CD4-positive, alpha-beta T cell (primary cell): ENCODE measurements at regions of chr1 and their contacts with region 1.

Region 1: DNA sequence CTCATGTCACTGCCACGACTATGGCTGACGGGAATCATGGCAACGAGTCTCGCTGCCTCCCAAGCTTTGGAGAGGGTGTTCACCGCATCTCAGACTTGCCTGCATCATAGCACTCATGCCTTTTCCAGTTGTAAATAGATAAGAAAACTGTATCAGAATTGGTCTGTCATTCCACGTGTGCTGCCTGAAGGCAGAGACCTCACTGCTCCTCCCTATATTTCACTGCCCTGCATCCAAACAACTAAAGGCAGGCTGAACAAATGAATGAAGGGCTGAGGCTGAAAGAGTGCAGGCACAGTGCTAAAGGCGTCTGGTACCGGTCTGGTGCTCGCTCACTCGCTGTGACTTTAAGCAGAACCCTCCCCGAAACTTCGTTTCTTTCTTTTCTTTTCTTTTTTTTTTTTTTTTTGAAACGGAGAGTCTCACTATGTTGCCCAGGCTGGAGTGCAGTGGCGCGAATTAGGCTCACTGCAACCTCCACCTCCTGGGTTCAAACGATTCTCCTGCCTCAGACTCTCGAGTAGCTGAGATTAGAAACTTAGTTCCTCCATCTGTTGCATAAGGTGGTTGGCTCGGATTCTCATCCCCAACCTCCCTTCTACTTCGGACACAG is 542 bp downstream of the EIF2B3 start:
- DNase-seq: no peak
- ATAC-seq: no peak
- H3K4me3 ChIP-seq: peak overlapping the region; percentile 73
- H3K4me3 Mint-ChIP-seq: peak overlapping the region; percentile 99
- H3K27ac ChIP-seq: no peak overlapping the region
- H3K27ac Mint-ChIP-seq: peak overlapping the region; percentile 74
- H3K4me1 ChIP-seq: peaks cover 20% of the 10 kb centered on the region
- H3K4me1 Mint-ChIP-seq: peaks cover 32% of the 10 kb centered on the region
- H3K27me3 ChIP-seq: no peaks in the 10 kb centered on the region
- H3K27me3 Mint-ChIP-seq: no peaks in the 10 kb centered on the region
- CTCF ChIP-seq: no peak

Region 2: DNA sequence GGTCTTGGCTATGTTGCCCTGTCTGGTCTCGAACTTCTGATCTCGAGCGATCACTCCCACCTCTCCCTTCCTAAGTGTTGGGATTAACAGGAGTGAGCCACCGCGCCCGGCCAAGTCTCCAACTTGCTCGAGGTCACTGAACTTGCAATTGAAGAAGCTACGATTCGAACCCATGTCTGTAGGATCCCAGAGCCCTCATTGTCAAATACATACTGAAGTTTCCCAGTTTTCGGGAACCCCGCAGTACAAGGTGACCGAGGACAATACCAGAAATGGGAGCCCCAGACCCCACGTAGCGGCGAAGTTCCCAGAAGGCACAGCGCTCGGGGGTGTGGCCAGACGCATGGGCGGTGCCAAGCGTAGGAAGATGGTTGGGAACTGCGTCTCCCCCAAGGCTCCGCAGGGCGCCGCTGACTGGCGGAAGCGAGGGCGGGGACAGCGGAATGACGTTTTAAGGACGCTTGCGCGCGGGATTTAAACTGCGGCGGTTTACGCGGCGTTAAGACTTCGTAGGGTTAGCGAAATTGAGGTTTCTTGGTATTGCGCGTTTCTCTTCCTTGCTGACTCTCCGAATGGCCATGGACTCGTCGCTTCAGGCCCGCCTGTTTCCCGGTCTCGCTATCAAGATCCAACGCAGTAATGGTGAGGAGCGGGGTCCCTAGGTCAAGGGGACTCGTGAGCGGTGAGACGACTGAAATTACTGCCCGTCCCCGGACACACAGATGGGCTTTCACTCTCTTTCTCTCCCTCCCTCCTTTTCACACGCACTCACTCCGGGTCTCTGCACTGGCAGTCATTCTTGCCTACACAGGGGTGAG is 246.3 kb before region 1 on chr1 and contains the start of gene KIF2C:
- CTCF ChIA-PET with region 1: no interaction called
- POLR2A ChIA-PET with region 1: no interaction called
- intact Hi-C with region 1: loop called in 1 of 2 experiments (anchors 5 kb)
- DNase-seq: peak; percentile 94 to 98 (median 96)
- ATAC-seq: peak; percentile 100
- H3K4me3 ChIP-seq: peak within 1 kb of the TSS; percentile 66
- H3K4me3 Mint-ChIP-seq: peak within 1 kb of the TSS; percentile 98
- H3K27ac ChIP-seq: peak within 1 kb of the TSS; percentile 63 to 85
- H3K27ac Mint-ChIP-seq: peak within 1 kb of the TSS; percentile 97
- H3K4me1 ChIP-seq: peaks cover 8% of the 10 kb centered on the region
- H3K4me1 Mint-ChIP-seq: peaks cover 18% of the 10 kb centered on the region
- H3K27me3 ChIP-seq: no peaks in the 10 kb centered on the region
- H3K27me3 Mint-ChIP-seq: no peaks in the 10 kb centered on the region
- CTCF ChIP-seq: no peak
- total RNA-seq, gene KIF2C: 0.64 to 0.82 TPM

Region 3: DNA sequence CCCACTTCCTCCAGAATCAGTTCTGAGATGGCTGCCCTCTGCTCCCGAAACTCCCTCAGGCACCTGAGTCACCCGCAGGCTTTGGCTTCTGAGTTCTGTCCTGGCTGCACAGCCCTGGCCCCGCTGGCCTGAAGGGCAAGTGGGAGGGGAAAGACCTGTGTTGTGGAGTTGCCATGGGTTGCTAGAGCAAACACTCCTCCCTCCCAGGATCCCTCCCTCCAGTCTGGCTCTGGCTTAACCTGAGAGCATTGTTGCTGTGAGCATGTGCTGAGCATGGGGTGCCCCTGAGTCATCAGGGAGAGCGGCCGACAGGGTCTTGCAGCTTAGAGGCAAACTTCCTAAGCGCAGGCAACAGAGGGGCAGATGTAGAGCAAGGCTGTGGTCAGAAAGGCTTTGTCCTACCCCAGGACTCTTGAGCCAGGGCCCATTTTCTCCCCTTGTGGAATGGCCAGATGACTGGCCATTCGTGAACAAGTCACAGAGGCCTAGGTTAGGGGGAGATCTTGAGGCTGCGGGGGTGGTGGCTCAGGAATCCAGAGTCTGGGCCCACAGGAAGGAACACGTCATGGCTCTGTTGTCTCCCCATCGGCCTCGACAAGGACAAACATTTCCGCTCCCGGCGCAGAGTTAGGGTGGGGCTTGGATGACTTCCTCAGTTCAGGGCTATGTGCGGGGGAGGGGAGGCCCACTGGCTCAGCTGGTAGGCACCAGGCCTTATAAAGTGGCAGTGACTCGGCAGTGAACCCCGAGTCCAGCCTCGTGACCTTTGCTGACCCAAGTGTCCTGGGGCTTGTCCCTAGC is 178.4 kb before region 1 on chr1 and contains the start of gene DYNLT4:
- CTCF ChIA-PET with region 1: interaction called, 3 read pairs
- POLR2A ChIA-PET with region 1: interaction called, 11 read pairs
- intact Hi-C with region 1: loop called in 1 of 2 experiments (anchors 10 kb)
- DNase-seq: peak; percentile 82 to 98 (median 94)
- ATAC-seq: peak; percentile 56
- H3K4me3 ChIP-seq: peak within 1 kb of the TSS; percentile 12
- H3K4me3 Mint-ChIP-seq: peak within 1 kb of the TSS; percentile 83
- H3K27ac ChIP-seq: peak within 1 kb of the TSS; percentile 99 to 100
- H3K27ac Mint-ChIP-seq: peak within 1 kb of the TSS; percentile 99
- H3K4me1 ChIP-seq: peaks cover 100% of the 10 kb centered on the region
- H3K4me1 Mint-ChIP-seq: peaks cover 79% of the 10 kb centered on the region
- H3K27me3 ChIP-seq: no peaks in the 10 kb centered on the region
- H3K27me3 Mint-ChIP-seq: peaks cover 4% of the 10 kb centered on the region
- CTCF ChIP-seq: no peak
- total RNA-seq, gene DYNLT4: 1.8 to 2.1 TPM

Region 4: DNA sequence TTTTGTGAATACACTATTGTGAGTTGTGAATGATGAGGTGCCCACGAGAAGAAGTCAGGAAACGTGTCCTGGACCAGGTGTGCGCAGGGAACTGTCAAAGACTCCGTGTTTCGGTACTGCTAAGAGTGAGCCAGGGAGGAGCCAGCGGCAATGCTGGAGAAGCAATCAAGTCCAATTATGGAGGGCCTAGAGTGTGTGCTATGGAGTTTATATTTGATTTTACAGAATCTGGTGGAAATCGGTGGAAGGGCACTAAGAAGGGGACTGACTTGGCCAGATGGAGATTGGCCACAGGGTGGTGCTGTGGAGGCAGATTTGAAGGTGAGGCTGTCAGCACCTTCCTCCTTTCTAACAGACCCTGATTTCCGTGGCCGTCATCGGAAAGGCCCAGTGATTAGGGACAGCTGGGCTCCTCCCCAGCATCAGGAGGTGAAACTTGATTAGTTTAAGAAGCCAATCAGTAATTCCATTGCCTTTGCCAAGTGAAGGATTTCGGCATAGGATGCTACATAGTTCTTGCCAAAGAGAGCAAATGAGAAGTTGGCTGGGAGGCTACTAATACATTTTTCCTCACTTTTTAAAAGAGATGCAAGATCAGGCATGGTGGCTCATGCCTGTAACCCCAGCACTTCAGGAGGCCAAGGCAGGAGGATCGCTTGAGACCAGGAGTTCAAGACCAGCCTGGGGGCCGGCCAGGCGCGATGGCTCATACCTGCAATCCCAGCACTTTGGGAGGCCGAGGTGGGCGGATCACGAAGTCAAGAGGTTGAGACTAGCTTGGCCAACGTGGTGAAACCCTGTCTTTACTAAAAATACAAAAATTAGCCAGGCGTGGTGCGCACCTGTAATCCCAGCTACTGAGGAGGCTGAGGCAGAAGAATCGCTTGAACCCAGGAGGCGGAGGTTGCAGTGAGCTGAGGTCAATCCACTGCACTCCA is 149.8 kb before region 1 on chr1:
- CTCF ChIA-PET with region 1: no interaction called
- POLR2A ChIA-PET with region 1: no interaction called
- intact Hi-C with region 1: loop called in 1 of 2 experiments (anchors 5 kb)
- DNase-seq: peak; percentile 77 to 93 (median 84)
- ATAC-seq: peak; percentile 98
- H3K4me3 ChIP-seq: no peak overlapping the region
- H3K4me3 Mint-ChIP-seq: no peak overlapping the region
- H3K27ac ChIP-seq: no peak overlapping the region
- H3K27ac Mint-ChIP-seq: no peak overlapping the region
- H3K4me1 ChIP-seq: peaks cover 9% of the 10 kb centered on the region
- H3K4me1 Mint-ChIP-seq: peaks cover 8% of the 10 kb centered on the region
- H3K27me3 ChIP-seq: no peaks in the 10 kb centered on the region
- H3K27me3 Mint-ChIP-seq: peaks cover 11% of the 10 kb centered on the region
- CTCF ChIP-seq: peak; percentile 91

Region 5: GRCh38 chr1:45508295-45509151 is 522.7 kb after region 1 on chr1:
- CTCF ChIA-PET with region 1: no interaction called
- POLR2A ChIA-PET with region 1: no interaction called
- intact Hi-C with region 1: no loop called
- DNase-seq: no peak
- ATAC-seq: no peak
- H3K4me3 ChIP-seq: no peak overlapping the region
- H3K4me3 Mint-ChIP-seq: no peak overlapping the region
- H3K27ac ChIP-seq: no peak overlapping the region
- H3K27ac Mint-ChIP-seq: peak overlapping the region; percentile 37
- H3K4me1 ChIP-seq: no peaks in the 10 kb centered on the region
- H3K4me1 Mint-ChIP-seq: no peaks in the 10 kb centered on the region
- H3K27me3 ChIP-seq: no peaks in the 10 kb centered on the region
- H3K27me3 Mint-ChIP-seq: no peaks in the 10 kb centered on the region
- CTCF ChIP-seq: no peak

Region 6: GRCh38 chr1:45804669-45804969 is 818.8 kb after region 1 on chr1:
- CTCF ChIA-PET with region 1: no interaction called
- POLR2A ChIA-PET with region 1: no interaction called
- intact Hi-C with region 1: no loop called
- DNase-seq: no peak
- ATAC-seq: no peak
- H3K4me3 ChIP-seq: no peak overlapping the region
- H3K4me3 Mint-ChIP-seq: peak overlapping the region; percentile 91
- H3K27ac ChIP-seq: no peak overlapping the region
- H3K27ac Mint-ChIP-seq: no peak overlapping the region
- H3K4me1 ChIP-seq: peaks cover 14% of the 10 kb centered on the region
- H3K4me1 Mint-ChIP-seq: peaks cover 25% of the 10 kb centered on the region
- H3K27me3 ChIP-seq: no peaks in the 10 kb centered on the region
- H3K27me3 Mint-ChIP-seq: no peaks in the 10 kb centered on the region
- CTCF ChIP-seq: no peak